ENCODE measurements at regions of chr3 and their contacts with region 1.

Region 1: GRCh38 chr3:123258811-123259420 is 57.2 kb downstream of the SEC22A start:
- DNase-seq: no peak
- ATAC-seq: peak in 5 of 8 donors; percentile 51 to 76 (median 64)
- H3K4me3 ChIP-seq: no peak overlapping the region
- H3K27ac ChIP-seq: no peak overlapping the region
- H3K4me1 ChIP-seq: peaks cover 0 to 10% (median 0%) of the 10 kb centered on the region in 9 donors
- H3K27me3 ChIP-seq: no peaks in the 10 kb centered on the region
- CTCF ChIP-seq: peak in 8 of 9 donors; percentile 36 to 72 (median 64)

Region 2: GRCh38 chr3:122843604-122844003 is 415.3 kb before region 1 on chr3:
- intact Hi-C with region 1: loop called in 1 of 10 experiments (anchors 5 kb)
- DNase-seq: no peak
- ATAC-seq: no peak
- H3K4me3 ChIP-seq: no peak overlapping the region
- H3K27ac ChIP-seq: no peak overlapping the region
- H3K4me1 ChIP-seq: no peaks in the 10 kb centered on the region
- H3K27me3 ChIP-seq: no peaks in the 10 kb centered on the region
- CTCF ChIP-seq: no peak

Region 3: DNA sequence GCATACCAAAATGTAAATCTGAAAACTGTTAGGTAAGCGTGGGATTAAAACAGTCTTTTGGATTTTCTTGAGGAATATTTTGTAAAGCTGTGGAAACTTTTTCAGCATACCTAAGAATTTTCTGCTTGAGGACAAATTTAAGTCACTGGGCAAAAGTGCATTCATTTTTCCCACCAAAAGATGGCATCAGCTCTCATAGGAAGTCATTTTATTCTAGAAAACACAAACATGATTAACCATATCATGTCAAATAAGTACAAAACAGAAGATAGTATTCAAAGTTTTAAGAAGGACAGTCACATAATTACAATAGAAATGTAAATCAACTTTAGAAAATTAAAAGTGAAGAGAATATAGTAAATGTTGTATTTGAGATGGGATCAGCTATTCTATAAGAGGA is 400.5 kb before region 1 on chr3:
- intact Hi-C with region 1: loop called in 1 of 10 experiments (anchors 10 kb)
- DNase-seq: no peak
- ATAC-seq: no peak
- H3K4me3 ChIP-seq: no peak overlapping the region
- H3K27ac ChIP-seq: no peak overlapping the region
- H3K4me1 ChIP-seq: peaks cover 0 to 3% (median 0%) of the 10 kb centered on the region in 9 donors
- H3K27me3 ChIP-seq: no peaks in the 10 kb centered on the region
- CTCF ChIP-seq: peak in 7 of 9 donors; percentile 16 to 59 (median 50)

Region 4: DNA sequence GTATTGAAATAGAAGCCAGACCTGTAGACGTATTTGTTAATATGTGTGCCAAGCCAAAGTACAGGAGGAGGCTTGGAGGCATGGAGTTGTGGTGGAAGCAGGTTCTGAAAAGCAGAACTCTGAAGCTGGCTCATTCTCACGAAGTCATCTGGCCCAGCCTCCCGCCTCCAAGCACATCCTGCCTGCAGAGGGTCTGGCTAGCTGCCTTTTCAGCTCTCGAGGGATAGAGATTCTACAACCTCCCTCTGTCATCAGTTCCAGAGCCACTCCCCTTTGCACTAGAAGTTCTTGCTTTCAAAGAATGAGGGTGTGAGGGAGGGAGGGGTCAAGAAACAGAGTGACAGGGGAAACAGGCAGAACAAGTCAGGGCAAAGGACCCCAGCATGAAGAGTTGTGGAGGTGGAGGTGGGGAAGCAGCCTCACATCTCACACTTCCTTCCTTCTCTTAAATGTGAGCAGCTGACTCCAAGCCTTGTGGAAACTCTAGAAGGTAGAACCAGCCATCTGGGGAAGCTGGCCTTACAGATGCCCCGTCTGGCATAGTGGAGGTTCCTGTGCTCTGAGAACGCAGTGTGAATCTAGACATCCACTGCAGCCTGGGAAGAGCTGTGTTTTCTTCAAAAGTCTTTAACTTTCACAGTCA is 368.7 kb before region 1 on chr3:
- intact Hi-C with region 1: loop called in 1 of 10 experiments (anchors 5 kb)
- DNase-seq: peak; percentile 43 to 83
- ATAC-seq: peak; percentile 82 to 90 (median 86)
- H3K4me3 ChIP-seq: no peak overlapping the region
- H3K27ac ChIP-seq: no peak overlapping the region
- H3K4me1 ChIP-seq: peaks cover 0 to 29% (median 18%) of the 10 kb centered on the region in 9 donors
- H3K27me3 ChIP-seq: peaks cover 0 to 3% (median 0%) of the 10 kb centered on the region in 7 donors
- CTCF ChIP-seq: no peak

Region 5: DNA sequence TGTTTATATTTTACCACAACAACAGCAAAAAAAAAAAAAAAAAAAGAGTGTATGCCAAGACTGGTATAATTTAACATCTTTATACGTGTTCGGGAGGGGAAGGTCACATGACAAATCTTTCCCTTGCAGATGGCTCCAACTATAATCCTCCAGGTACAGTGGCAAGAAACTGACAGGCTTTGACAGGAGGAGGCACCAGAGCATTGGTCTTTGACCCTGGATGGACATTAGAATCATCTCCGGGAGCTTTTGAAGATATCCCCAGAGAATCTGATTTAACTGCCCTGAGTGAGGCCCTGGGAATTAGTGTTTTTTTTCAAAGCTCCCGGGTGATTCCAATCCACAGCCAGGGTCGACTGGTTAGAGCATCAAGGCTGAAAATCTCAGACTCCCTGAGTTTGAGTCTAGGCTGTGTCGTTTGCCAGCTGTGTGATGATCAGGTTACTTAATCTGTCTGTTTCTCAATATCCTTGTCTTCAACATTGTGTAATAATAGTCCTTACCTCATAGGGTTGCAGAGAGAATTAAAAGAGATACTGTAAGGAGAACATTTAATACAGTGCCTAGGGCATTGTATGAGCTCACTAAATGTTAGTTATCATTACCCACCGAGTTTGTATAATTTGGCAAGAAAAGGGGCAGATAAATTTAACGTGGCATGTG is 222.4 kb before region 1 on chr3:
- intact Hi-C with region 1: loop called in 3 of 10 experiments (anchors 10 kb)
- DNase-seq: no peak
- ATAC-seq: peak in 6 of 8 donors; percentile 26 to 88 (median 46)
- H3K4me3 ChIP-seq: no peak overlapping the region
- H3K27ac ChIP-seq: no peak overlapping the region
- H3K4me1 ChIP-seq: peaks cover 0 to 9% (median 1%) of the 10 kb centered on the region in 9 donors
- H3K27me3 ChIP-seq: peaks cover 0 to under 1% (median 0%) of the 10 kb centered on the region in 7 donors
- CTCF ChIP-seq: peak in 2 of 9 donors; percentile 14 to 15